GM23248 (cell line): ENCODE measurements at regions of chr2 and their contacts with region 1.

Region 1: DNA sequence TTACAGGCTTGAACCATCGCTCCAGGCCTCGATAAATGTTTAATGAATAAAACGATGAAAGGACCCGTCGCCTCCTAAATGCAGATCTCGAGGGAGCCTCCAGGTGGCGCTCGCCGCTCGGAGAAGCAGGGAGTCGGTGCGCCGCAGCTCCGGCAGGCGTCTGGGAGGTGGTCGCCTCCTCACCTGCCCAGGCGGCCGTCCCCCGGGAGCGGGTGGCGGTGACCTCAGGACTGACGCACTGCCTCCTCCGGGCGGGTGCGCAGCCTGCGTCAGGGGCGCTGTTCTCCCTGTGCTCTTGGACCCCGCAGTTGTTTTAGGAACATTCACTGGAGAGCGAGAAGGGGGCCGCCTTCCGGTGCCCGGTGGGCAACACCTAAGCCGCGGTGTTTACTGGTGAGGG is 38.6 kb upstream of the POLE4 start:
- DNase-seq: peak; percentile 62
- H3K4me3 ChIP-seq: peak overlapping the region; percentile 74
- H3K27ac ChIP-seq: no peak overlapping the region
- H3K4me1 ChIP-seq: peaks cover 17% of the 10 kb centered on the region
- H3K27me3 ChIP-seq: no peaks in the 10 kb centered on the region

Region 2: DNA sequence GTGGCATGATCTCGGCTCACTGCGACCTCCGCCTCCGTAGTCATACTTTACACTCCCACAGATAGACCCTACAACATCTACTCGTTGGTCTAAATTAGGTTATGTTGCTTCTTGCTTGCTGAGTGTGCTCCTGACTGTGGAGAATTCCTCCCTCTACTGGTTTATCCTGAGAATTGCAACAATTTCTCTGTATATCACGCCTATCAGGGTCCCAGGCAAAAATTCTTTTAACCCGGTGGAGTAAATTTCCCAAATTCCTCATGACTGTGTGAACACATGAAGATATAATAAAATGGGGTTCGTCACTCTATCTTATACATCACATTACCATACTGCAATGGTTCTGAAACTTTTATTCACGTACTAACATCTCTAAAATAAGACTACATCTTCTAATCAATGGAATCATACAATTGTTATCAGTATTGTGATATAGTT is 484.2 kb after region 1 on chr2:
- in situ Hi-C with region 1: loop called (anchors 10 kb)
- DNase-seq: peak; percentile 69
- H3K4me3 ChIP-seq: no peak overlapping the region
- H3K27ac ChIP-seq: no peak overlapping the region
- H3K4me1 ChIP-seq: no peaks in the 10 kb centered on the region
- H3K27me3 ChIP-seq: no peaks in the 10 kb centered on the region

Region 3: DNA sequence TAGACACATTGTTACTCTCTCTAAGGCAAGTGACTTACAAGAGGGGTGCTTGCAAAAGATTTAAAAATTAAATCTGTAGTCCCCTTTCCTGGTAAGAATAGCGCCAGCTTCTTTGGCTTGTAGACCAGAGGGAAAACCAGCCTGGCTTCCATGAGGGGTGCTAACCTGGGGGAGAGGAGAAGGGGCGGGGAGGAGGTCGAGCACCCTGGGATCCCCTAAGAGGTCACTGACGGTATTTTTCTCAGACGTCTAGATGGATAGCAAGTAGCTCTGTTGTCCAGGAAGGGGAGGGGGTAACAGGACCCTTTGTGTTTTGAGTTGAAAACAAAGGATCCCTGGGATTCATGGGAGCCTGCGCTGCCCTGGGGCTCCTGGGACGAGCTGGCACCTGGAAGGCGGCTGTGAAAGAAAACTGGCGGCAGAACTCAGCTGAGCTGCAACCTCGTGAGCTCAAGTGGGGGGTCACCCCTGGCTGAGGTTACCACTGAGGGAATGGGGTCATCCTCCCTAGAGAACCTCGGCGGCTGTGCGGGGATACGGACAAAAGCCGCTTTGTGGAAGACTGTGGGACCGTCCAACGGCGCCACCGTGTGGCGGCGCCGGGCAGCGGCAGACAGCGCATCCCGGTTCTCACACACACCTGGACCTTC is 689.0 kb after region 1 on chr2:
- in situ Hi-C with region 1: loop called (anchors 25 kb)
- DNase-seq: peak; percentile 75
- H3K4me3 ChIP-seq: peak overlapping the region; percentile 65
- H3K27ac ChIP-seq: no peak overlapping the region
- H3K4me1 ChIP-seq: peaks cover 49% of the 10 kb centered on the region
- H3K27me3 ChIP-seq: no peaks in the 10 kb centered on the region